ENCODE measurements at regions of chr3 and their contacts with region 1.

Region 1: DNA sequence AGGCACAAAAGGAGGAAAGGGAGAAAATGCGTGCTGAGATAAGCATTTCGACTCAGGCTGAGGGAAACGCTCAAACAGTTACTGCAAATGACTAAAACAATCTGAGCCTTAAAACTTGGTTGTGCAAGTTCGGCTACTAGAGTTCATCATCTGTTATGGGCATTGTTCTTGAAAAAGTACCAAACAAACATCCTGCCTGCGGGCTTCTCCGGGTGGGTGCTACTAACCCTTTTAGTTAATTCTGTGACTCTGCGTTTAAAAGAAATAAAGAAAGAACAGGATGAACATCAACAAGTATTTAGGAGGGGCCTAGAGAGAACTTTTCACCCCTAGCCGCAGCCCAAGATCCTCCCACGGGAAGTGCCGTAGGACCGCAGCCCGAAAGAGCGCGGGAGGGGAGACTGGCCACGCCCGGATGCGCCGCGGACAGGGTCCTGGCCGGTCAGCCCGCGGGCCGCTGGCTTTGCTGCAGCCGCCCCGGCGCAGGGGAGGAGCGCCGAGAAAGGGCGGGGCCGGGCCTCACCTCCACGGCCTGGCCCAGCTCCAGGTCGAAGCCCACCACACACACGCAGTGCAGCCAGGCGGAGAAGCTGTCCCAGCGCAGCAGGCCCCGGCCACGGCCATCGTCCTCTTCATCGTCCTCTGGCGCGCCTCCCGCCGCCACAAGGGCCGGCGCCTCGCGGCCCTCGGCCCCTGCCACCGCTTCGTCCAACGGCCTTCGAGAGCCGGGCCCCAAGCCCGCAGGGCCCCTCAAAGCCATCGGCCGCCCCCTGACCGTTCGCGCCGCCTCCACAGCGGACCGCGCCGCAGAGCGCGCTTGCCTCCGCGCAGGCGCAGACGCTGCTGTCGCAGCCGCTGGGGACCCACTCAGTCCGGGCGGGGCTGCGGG is at the start of gene DENND6A:
- DNase-seq: peak; percentile 94
- H3K4me3 Mint-ChIP-seq: peak within 1 kb of the TSS; percentile 91
- H3K27ac Mint-ChIP-seq: peak within 1 kb of the TSS; percentile 91
- H3K4me1 Mint-ChIP-seq: peaks cover 30% of the 10 kb centered on the region
- H3K27me3 Mint-ChIP-seq: peaks cover 3% of the 10 kb centered on the region
- total RNA-seq, gene DENND6A: 23.6 and 26.2 TPM in 2 replicates

Region 2: GRCh38 chr3:56688191-56688590 is 1004.3 kb before region 1 on chr3:
- intact Hi-C with region 1: loop called (anchors 5 kb)
- DNase-seq: no peak
- H3K4me3 Mint-ChIP-seq: no peak overlapping the region
- H3K27ac Mint-ChIP-seq: no peak overlapping the region
- H3K4me1 Mint-ChIP-seq: peaks cover 15% of the 10 kb centered on the region
- H3K27me3 Mint-ChIP-seq: peaks cover 2% of the 10 kb centered on the region

Region 3: DNA sequence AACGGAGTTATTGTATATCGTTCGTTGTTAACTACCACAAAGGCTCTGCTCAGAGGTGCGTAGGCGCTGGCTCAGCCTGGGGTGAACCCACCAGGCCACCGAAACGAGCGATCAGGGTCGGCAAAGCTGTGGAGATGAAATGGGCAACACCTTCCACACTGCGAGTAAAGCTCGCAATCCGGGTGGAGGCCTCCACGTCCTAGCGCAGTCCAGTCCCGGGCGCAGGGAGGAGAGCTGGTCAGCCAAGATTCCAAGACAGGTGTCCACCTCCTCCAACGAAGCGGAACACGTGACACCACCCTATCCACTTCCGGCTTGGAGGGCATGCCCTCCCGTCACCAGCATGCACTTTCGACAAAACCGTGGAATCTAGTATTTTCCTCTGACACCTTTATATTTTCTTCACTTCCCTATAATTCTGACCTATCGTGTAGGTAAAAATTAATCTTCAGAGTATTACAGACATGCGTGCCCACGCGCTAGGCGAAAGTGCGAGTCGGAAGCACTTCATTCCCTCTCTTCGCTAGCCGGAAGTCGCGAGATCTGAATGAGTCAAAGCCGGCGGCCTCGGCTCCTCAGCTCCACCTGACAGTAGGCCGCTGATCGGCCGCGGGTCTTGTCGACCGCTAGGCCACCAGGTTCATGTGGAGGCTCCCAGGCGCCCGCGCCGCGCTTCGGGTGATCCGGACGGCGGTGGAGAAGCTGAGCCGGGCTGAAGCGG is 136.6 kb before region 1 on chr3 and contains the start of gene PDE12:
- intact Hi-C with region 1: loop called (anchors 1 kb)
- DNase-seq: peak; percentile 78
- H3K4me3 Mint-ChIP-seq: peak within 1 kb of the TSS; percentile 100
- H3K27ac Mint-ChIP-seq: peak within 1 kb of the TSS; percentile 100
- H3K4me1 Mint-ChIP-seq: peaks cover 47% of the 10 kb centered on the region
- H3K27me3 Mint-ChIP-seq: no peaks in the 10 kb centered on the region
- total RNA-seq, gene PDE12: 34.7 and 34.9 TPM in 2 replicates

Region 4: GRCh38 chr3:57889807-57890206 is 197.3 kb after region 1 on chr3:
- intact Hi-C with region 1: no loop called
- DNase-seq: no peak
- H3K4me3 Mint-ChIP-seq: no peak overlapping the region
- H3K27ac Mint-ChIP-seq: no peak overlapping the region
- H3K4me1 Mint-ChIP-seq: no peaks in the 10 kb centered on the region
- H3K27me3 Mint-ChIP-seq: no peaks in the 10 kb centered on the region

Region 5: GRCh38 chr3:58237238-58237940 is 544.9 kb after region 1 on chr3 and contains the start of gene ABHD6:
- intact Hi-C with region 1: loop called (anchors 5 kb)
- DNase-seq: peak; percentile 78
- H3K4me3 Mint-ChIP-seq: peak within 1 kb of the TSS; percentile 90
- H3K27ac Mint-ChIP-seq: peak within 1 kb of the TSS; percentile 67
- H3K4me1 Mint-ChIP-seq: peaks cover 12% of the 10 kb centered on the region
- H3K27me3 Mint-ChIP-seq: peaks cover 32% of the 10 kb centered on the region
- total RNA-seq, gene ABHD6: 9.2 and 10.1 TPM in 2 replicates

Measured in activated T-helper 1 cell treated with anti-CD3 and anti-CD28 coated beads, Interleukin-12 subunit alpha, Interleukin-12 subunit beta, Interleukin-2, Interleukin-4 antibody, amounts not matched to agents 30 ng/mL and 10 ng/mL and 1 ng/mL, durations not matched to agents 14 hours and 24 hours and 36 hours (primary cell).